ENCODE measurements at regions of chr3 and their contacts with region 1.

Region 1: DNA sequence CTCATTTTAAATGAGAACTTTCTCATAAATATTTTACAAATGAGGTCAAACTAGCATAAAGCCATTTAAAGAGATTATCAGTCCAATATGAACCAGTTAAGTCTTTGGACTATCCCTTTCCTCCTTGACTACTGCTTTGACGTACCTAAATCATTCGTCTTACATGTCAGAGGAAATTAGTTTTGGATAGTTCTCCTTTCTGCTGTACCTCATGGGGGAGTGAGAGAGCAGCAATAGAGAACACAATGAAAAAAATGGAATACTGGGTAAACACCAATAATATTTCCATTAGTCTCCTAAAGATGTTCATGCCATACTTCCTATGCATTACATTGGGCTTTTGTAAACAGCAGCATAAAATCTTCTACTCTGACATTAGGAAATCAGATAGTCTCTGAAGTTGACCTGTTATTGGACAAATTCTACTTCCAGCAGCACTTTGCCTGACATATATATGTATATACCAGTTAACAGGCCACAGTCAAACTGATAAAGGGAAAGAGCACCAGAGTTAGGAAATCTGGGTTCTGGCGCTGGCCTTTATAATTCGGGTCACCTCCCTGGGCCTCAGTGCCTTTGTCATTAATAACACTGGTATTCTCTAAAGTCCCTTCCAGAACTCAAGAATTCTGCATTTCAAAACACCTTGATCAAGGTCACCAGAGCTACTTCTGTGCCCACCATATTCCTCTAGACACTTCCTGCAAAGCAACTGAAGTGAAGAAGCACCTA is 26.8 kb downstream of the TIMMDC1 start:
- DNase-seq: no peak
- H3K4me3 ChIP-seq: no peak overlapping the region
- H3K27ac ChIP-seq: peak overlapping the region; percentile 34
- H3K4me1 ChIP-seq: peaks cover 6% of the 10 kb centered on the region
- H3K27me3 ChIP-seq: no peaks in the 10 kb centered on the region
- CTCF ChIP-seq: peak; percentile 59

Region 2: DNA sequence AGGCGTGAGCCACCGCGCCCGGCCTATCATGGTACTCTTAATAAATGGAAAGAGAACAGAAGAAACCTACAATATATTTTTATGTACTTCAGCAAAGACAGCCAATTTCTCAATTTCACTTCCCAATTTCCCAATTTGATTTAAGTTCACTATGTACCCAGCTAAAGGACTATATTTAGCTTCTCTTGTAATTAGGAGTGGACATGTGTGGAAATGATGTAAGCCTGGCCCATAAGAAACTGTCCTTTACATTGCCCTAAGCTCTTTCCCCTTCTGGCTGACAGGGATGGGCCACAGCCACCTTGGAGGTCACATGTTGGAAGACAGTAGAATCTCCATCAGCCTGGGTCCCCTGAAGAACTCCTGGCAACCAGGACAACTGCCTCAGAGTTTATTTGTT is 67.9 kb before region 1 on chr3:
- intact Hi-C with region 1: no loop called
- DNase-seq: no peak
- H3K4me3 ChIP-seq: no peak overlapping the region
- H3K27ac ChIP-seq: no peak overlapping the region
- H3K4me1 ChIP-seq: peaks cover 61% of the 10 kb centered on the region
- H3K27me3 ChIP-seq: no peaks in the 10 kb centered on the region
- CTCF ChIP-seq: no peak

Region 3: GRCh38 chr3:119628816-119629445 is 103.8 kb after region 1 on chr3:
- intact Hi-C with region 1: no loop called
- DNase-seq: no peak
- H3K4me3 ChIP-seq: no peak overlapping the region
- H3K27ac ChIP-seq: peak overlapping the region; percentile 69
- H3K4me1 ChIP-seq: peaks cover 67% of the 10 kb centered on the region
- H3K27me3 ChIP-seq: no peaks in the 10 kb centered on the region
- CTCF ChIP-seq: no peak

Region 4: DNA sequence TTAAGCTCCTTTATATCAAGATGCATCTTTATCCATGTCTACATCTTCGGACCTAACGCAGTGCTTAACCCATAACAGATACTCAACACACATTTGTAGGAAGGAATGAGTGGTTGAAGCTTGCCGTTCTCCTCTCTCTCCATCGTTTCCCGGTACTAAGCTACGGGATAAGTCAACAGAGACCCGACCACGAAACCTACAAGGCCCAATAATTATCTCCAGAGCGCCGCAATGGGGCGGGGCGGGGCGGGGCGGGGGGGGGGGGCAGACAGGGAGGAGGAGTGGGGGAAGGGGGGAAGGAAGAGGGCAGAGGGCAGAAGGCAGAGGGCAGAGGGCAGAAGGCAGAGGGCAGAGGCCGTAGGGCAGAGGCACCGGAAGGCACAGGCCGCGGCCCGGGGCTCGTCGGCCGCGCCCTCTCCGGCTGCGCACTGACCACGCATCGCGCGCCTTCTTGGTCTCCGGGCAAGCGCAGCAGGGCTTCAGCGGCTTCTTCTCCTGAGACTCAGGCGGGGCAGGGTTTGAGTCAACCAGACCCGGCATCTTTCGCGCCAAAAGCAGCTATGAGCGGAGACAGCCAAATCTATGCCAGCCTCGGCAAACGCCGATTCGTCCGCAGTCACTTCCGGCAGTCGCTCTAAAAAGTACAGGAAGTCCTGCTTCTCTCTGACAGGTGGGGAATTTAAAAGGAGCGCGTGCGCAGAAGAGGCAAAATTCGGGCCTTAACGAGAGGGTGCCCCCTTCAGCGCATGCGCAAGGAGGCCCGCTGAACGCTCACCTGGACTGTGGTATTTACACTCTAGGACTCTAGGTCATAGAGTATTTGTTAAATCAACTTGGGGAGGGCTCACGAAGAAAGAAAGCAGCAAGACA is 151.9 kb after region 1 on chr3 and contains the start of gene COX17:
- intact Hi-C with region 1: loop called (anchors 10 kb)
- DNase-seq: peak; percentile 93
- H3K4me3 ChIP-seq: peak within 1 kb of the TSS; percentile 80
- H3K27ac ChIP-seq: peak within 1 kb of the TSS; percentile 98
- H3K4me1 ChIP-seq: peaks cover 55% of the 10 kb centered on the region
- H3K27me3 ChIP-seq: no peaks in the 10 kb centered on the region
- CTCF ChIP-seq: no peak
- total RNA-seq, gene COX17: 165 TPM

Measured in left ventricle myocardium inferior (tissue), 1 donor.